ENCODE measurements at regions of chr1 and their contacts with region 1.

Region 1: GRCh38 chr1:1122078-1122811 is 6.4 kb upstream of the C1orf159 start:
- DNase-seq: peak; percentile 91
- ATAC-seq: peak; percentile 88

Region 2: DNA sequence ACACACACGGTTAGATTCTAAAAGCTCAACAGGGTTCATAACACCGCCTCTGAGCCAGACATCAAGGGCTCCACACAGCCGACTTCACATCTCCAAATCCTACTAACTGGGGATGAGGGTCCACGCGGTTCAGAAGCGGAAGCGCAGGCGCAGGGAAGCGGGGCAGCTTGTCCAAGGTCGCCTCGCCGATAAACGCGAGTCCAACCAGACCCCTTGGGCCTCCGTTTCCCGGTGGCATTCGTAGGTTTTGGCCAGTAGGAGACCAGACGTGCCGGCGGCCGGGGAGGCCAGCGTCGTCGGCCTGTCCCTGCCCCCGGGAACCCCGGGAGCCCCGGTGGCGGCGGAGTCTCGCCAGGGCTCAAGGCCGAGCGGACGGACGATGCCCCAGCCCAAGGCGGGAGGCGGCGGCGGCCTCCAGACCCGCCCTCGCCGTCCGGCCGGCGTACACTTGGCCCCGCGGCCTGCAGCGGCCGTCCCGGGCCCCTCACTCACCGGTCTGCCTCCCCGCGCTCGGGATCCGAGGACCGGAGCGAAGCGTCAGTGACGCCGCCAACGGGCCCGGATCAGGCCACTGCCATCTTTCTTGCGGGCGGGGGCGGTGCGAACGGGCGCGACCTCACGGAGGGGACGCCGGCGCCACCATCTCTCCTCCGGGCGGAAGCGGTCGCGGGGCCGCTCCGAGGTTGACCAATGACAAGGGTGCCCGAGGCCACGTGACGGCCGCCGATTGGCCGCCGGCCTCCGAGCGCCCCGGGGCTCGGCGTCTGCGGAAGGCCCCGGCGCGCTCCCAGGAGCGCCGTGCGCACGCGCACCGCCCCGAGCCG is 109.4 kb after region 1 on chr1 and contains the start of gene SDF4:
- intact Hi-C with region 1: loop called (anchors 5 kb)
- DNase-seq: peak; percentile 99
- ATAC-seq: peak; percentile 98
- total RNA-seq, gene SDF4: 125 TPM

Region 3: GRCh38 chr1:1250786-1251284 is 128.6 kb after region 1 on chr1:
- intact Hi-C with region 1: loop called (anchors 5 kb)
- DNase-seq: no peak
- ATAC-seq: no peak

Region 4: GRCh38 chr1:1291548-1292441 is 169.6 kb after region 1 on chr1:
- intact Hi-C with region 1: loop called (anchors 2 kb)
- DNase-seq: peak; percentile 78
- ATAC-seq: peak; percentile 64

Region 5: DNA sequence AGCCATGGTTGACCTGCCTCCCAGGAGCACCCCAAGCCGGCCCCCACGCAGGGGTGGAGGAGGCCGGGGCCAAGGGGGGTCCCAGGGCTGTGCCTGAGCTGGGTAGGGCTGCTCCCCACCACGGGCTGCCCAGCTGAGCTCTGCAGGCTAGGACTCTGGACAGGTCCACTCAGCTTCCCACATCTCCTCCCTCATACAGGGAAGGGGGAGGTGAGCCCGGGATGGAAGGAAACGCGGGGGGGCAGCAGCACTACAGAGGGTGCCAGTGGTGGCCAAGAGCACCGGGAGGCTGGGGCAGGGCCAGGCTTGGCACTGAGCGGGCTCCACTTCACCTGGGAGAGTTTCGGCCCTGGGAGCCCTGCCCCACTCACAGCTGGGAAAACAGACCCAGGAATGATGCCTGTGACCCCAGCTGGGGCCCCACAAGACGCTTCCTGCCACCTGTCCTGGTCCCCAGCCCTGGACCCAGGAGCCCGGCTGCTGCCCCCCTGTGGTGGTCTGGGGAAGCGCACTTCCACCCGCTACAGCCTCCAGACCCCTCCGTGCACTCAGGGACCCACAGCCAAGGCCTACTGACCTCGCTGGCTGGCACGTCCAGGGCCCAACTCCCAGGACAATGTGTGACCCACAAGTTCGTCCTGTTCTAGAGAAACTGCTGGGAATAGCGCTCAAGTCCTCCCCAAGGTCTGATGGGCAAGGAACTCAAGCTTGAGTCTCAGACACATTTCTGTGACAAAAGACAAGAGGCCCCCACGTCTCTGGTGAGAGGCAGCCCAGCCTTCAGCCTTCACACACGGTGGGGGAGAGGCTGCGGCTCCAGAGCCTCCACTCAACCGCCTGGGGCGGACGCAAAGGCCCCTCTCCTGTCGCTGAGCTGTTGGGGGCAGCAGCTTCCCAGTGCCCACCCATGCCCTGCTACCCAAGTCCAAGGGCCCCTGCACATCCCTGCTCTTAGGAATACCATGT is 249.8 kb after region 1 on chr1:
- intact Hi-C with region 1: loop called (anchors 2 kb)
- DNase-seq: peak; percentile 82
- ATAC-seq: peak; percentile 29

Measured in Right ventricle myocardium inferior (tissue), 1 donor.